HCT116 (cell line): ENCODE measurements at regions of chr11 and their contacts with region 1.

Region 1: DNA sequence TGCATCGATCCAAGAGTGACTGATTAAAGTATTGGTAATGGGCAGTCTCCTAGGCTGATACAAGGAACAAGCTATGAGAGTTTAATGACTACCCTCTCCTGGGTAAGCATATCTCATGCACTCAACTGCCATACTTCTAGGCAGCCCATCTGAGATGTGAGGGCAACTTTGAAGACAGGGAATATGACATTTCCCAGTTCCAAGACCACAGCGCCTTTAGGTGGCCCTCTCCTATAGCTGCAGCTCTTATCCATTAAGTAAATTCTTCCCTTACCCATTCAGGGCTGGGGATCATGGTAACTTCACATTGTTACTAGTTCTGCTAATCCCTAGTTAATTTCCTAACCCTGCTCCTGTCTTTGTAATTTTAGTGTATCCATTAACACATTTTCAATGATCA is 157.3 kb upstream of the CTSC start:
- DNase-seq: no peak
- ATAC-seq: no peak
- H3K4me3 ChIP-seq: no peak overlapping the region
- H3K27ac ChIP-seq: no peak overlapping the region
- H3K4me1 ChIP-seq: no peaks in the 10 kb centered on the region
- H3K27me3 ChIP-seq: no peaks in the 10 kb centered on the region
- CTCF ChIP-seq: no peak
- POLR2A ChIP-seq: no peak
- RAD21 ChIP-seq: peak; percentile 33

Region 2: GRCh38 chr11:88337181-88337986 is 157.5 kb before region 1 on chr11 and contains the start of gene CTSC:
- CTCF ChIA-PET with region 1: no interaction called
- POLR2A ChIA-PET with region 1: no interaction called
- RAD21 ChIA-PET with region 1: no interaction called
- intact Hi-C with region 1: no loop called
- DNase-seq: peak; percentile 53
- ATAC-seq: peak; percentile 91
- H3K4me3 ChIP-seq: peak within 1 kb of the TSS; percentile 79 to 91
- H3K27ac ChIP-seq: peak within 1 kb of the TSS; percentile 52
- H3K4me1 ChIP-seq: peaks cover 3 to 19% of the 10 kb centered on the region in 2 experiments; a peak in 3 of 4 replicates
- H3K27me3 ChIP-seq: no peaks in the 10 kb centered on the region
- CTCF ChIP-seq: no peak
- POLR2A ChIP-seq: peak; percentile 93
- RAD21 ChIP-seq: no peak
- total RNA-seq, gene CTSC: 38.0 TPM

Region 3: DNA sequence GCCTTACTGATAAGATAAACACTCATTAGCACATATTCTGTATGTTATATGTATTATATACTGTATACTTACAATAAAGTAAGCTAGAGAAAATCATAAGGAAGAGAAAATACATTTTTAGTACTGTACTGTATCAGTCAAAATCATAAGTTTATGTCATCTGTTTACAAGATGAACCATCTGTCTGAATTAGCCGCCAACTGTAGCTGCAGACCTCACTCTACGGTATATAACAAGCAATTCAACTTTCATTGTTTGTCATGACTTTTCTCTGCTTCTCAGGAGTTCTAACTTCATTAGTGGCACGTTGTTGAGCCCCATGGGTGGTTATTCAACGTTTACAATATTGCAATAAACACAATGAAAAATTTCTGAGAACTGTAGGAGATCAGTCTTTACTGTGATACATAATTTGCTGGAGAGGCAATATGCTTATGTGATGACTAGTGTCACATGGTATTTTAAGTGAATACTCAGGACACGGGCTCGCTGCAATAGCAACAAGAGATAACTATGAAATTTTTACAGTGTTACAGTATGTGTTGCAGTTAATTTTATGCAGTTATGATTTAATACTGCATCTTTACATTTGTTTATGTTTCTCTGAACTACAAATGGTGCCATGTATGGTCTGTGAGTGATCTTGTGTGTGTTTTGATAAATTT is 25.2 kb before region 1 on chr11:
- CTCF ChIA-PET with region 1: no interaction called
- POLR2A ChIA-PET with region 1: no interaction called
- RAD21 ChIA-PET with region 1: no interaction called
- intact Hi-C with region 1: loop called (anchors 1 kb)
- DNase-seq: no peak
- ATAC-seq: no peak
- H3K4me3 ChIP-seq: no peak overlapping the region
- H3K27ac ChIP-seq: no peak overlapping the region
- H3K4me1 ChIP-seq: no peaks in the 10 kb centered on the region
- H3K27me3 ChIP-seq: no peaks in the 10 kb centered on the region
- CTCF ChIP-seq: no peak
- POLR2A ChIP-seq: no peak
- RAD21 ChIP-seq: no peak

Region 4: GRCh38 chr11:88508759-88509581 is 14.1 kb after region 1 on chr11:
- CTCF ChIA-PET with region 1: no interaction called
- POLR2A ChIA-PET with region 1: no interaction called
- RAD21 ChIA-PET with region 1: no interaction called
- intact Hi-C with region 1: no loop called
- DNase-seq: no peak
- ATAC-seq: no peak
- H3K4me3 ChIP-seq: no peak overlapping the region
- H3K27ac ChIP-seq: no peak overlapping the region
- H3K4me1 ChIP-seq: no peaks in the 10 kb centered on the region
- H3K27me3 ChIP-seq: no peaks in the 10 kb centered on the region
- CTCF ChIP-seq: no peak
- POLR2A ChIP-seq: no peak
- RAD21 ChIP-seq: no peak